AG04449 (cell line): ENCODE measurements at regions of chr2 and their contacts with region 1.

Region 1: DNA sequence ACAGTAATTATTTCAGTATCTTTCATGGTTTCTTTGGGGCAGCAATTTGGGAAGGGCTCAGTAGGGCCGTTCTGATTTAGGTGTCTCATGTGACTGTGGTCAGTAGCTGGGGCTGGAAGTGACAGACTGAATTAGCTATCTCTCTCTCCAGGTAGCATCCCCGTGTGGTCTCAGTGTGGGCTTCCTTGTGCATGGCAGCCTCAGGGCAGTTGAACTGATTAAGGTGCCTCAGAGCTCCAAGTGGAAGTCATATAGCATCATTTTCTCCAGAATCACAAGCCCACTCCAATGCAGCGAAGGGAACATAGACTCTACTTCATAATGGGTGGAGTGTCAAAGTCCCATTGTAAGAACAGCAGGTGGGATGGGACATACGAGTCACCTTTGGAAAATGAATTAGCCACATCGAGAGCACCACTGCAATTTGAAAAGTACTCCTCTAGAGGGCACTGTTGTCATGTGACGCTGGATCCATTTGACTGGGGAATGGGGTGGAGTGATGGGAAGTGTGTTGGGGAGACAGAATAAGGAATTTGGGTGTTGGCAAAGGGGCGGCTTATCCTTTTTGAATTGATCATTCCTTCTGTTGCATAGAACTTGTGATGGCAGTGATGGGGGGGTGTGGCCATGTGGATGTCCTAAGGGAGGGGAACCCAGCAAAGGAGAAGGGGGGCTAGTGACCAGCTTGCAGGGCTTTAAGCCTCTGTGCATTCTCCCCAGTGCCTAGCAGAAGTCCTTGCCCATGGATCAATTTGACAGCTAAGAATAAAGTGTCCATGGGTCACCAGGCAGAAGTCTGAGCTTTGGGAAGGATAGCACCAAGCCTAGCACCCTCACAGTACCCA is 39.3 kb upstream of the FAM136A start:
- DNase-seq: no peak
- H3K4me3 ChIP-seq: no peak overlapping the region
- CTCF ChIP-seq: peak; percentile 72

Region 2: DNA sequence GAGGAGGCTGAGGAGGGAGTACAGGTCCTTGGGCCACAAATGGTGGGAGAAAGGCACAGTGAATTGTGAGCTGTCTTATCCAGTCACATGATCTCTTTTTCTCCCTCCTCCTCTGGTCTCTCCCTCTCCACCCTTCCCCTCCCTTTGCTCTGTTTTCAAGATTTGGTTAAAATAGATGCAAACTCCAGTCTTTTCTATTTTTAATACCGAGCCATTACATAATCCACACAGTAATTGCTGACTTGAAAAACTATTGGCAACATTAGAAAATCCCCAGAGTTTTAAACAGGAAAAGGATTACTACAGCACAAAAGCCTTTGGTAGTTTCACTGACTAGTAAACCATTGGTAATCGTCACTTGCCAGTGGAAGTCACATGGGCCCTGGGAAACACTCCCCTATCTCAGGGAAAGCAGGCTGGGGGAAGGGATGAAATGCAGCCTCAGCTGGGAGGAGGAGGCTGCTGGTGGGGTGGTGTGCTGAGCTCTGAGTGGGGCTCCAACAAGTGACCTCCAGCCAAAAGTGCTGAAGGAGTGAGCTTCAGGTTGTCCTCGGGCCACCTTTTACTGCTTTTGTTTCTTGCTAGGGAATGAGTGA is 311.2 kb before region 1 on chr2:
- CTCF ChIA-PET with region 1: no interaction called
- POLR2A ChIA-PET with region 1: no interaction called
- DNase-seq: no peak
- H3K4me3 ChIP-seq: no peak overlapping the region
- CTCF ChIP-seq: no peak

Region 3: DNA sequence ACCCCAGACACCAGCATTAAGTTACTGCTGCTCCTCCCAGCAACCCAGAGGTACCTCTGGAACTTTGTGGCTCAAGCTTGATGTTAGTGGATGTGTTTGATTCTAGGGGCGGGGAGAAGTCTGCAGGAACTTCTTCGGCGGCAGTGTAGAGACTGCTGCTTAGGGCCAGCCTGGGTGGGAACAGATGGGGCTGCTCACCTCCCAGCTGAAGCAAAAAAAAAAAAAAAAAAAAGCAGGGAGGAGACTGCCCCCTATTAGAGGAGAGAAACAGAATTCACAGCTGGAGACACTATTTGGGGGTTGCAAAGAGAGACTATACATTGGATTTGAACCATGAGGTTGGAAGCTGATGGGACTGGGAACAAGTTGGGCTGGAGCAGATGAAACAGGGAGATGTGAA is 10.7 kb before region 1 on chr2:
- CTCF ChIA-PET with region 1: interaction called, 16 read pairs
- POLR2A ChIA-PET with region 1: no interaction called
- DNase-seq: no peak
- H3K4me3 ChIP-seq: no peak overlapping the region
- CTCF ChIP-seq: no peak

Region 4: GRCh38 chr2:70354264-70354949 is 13.3 kb after region 1 on chr2:
- CTCF ChIA-PET with region 1: interaction called, 17 read pairs
- POLR2A ChIA-PET with region 1: no interaction called
- DNase-seq: no peak
- H3K4me3 ChIP-seq: no peak overlapping the region
- CTCF ChIP-seq: no peak

Region 5: GRCh38 chr2:70616168-70616694 is 275.1 kb after region 1 on chr2:
- CTCF ChIA-PET with region 1: interaction called, 136 read pairs
- POLR2A ChIA-PET with region 1: no interaction called
- DNase-seq: no peak
- H3K4me3 ChIP-seq: no peak overlapping the region
- CTCF ChIP-seq: no peak